ENCODE measurements at regions of chr12 and their contacts with region 1.

Region 1: DNA sequence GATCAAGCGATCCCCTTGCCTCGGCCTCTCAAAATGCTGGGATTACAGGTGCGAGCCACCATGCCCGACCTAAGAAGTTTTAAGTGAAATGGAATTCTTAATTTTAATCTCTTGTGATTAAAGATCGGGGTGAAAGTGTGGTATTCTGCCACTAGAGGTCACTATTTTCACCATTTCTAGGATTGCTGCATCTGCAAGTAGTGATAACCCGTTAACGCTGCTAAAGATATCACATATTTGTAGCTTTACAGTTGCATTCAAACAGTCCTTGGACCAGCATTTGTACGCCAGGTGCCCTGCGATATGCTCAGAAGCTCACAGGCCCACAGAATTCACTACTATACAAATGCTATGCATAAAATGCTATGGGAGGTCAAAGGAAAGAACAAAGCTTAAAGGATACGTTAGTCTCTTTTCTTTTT is 19.3 kb downstream of the CCDC62 start:
- DNase-seq: peak in 4 of 5 donors; percentile 55 to 60 (median 58)
- H3K4me3 ChIP-seq: no peak overlapping the region
- H3K4me3 Mint-ChIP-seq: peak overlapping the region in 1 of 8 donors; percentile 29
- H3K27ac ChIP-seq: no peak overlapping the region
- H3K27ac Mint-ChIP-seq: no peak overlapping the region
- H3K4me1 ChIP-seq: peaks cover 3% of the 10 kb centered on the region
- H3K4me1 Mint-ChIP-seq: peaks cover 0 to 5% (median 4%) of the 10 kb centered on the region in 4 donors
- H3K27me3 ChIP-seq: no peaks in the 10 kb centered on the region
- H3K27me3 Mint-ChIP-seq: no peaks in the 10 kb centered on the region

Region 2: DNA sequence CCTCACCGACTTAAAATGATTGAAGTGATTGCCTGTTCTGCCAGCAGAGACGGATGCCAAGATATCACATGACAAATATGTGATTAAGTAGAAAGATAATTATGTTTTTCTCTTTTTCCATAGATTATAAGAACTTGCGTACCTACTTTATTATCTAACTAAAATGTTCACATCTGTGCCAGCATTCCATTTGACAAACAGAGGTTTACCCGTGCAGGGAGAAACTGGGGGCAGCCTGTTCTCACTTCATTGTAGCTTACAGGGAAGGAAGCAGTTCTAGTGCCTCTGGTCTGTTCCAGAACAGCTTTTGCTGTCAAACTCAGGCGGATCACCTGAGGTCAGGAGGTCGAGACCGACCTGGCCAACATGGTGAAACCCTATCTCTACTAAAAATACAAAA is 10.2 kb after region 1 on chr12:
- CTCF ChIA-PET with region 1: interaction called, 13 read pairs
- POLR2A ChIA-PET with region 1: interaction called, 3 read pairs
- intact Hi-C with region 1: no loop called
- DNase-seq: no peak
- H3K4me3 ChIP-seq: no peak overlapping the region
- H3K4me3 Mint-ChIP-seq: no peak overlapping the region
- H3K27ac ChIP-seq: no peak overlapping the region
- H3K27ac Mint-ChIP-seq: no peak overlapping the region
- H3K4me1 ChIP-seq: no peaks in the 10 kb centered on the region
- H3K4me1 Mint-ChIP-seq: no peaks in the 10 kb centered on the region
- H3K27me3 ChIP-seq: no peaks in the 10 kb centered on the region
- H3K27me3 Mint-ChIP-seq: no peaks in the 10 kb centered on the region

Region 3: GRCh38 chr12:122819209-122819785 is 25.6 kb after region 1 on chr12:
- CTCF ChIA-PET with region 1: interaction called, 11 read pairs
- POLR2A ChIA-PET with region 1: no interaction called
- intact Hi-C with region 1: no loop called
- DNase-seq: no peak
- H3K4me3 ChIP-seq: no peak overlapping the region
- H3K4me3 Mint-ChIP-seq: no peak overlapping the region
- H3K27ac ChIP-seq: no peak overlapping the region
- H3K27ac Mint-ChIP-seq: no peak overlapping the region
- H3K4me1 ChIP-seq: no peaks in the 10 kb centered on the region
- H3K4me1 Mint-ChIP-seq: no peaks in the 10 kb centered on the region
- H3K27me3 ChIP-seq: no peaks in the 10 kb centered on the region
- H3K27me3 Mint-ChIP-seq: no peaks in the 10 kb centered on the region

Region 4: DNA sequence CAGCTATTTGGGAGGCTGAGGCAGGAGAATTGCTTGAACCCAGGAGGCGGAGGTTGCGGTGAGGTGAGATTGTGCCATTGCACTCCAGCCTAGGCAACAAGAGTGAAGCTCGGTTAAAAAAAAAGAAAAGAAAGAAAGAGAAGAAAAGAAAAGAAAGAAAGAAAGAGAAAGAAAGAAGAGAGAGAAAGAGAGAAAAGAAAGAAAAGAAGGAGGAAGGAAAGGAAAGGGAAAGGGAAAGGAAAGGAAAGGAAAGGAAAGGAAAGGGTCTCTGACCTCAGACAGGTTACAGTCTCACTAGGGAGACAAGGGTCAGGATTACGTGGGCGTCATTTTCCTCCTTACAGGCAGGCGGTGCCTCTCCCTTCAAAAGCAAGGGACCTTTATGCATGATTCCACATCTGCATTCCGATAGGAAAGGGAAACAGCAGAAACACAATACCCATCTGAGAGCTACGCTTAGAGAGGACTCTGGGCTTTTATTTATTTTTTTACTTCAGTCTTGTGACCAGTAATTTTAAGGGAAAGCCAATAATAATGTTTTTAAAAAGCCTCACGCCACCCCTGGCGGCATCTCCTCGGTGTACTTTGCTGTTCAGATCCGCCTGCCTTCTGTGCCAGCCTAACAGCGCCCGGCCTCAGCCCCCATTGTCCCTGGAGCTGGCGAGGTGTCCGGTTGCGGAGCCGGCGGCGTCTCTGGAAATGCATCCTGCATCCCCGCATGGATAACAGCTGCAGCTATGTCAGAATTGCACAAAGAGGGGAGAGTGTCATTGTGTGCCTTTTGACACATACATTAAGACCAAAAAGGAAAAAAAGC is 40.6 kb after region 1 on chr12:
- CTCF ChIA-PET with region 1: interaction called, 28 read pairs
- POLR2A ChIA-PET with region 1: interaction called, 13 read pairs
- intact Hi-C with region 1: loop called (anchors 1 kb)
- DNase-seq: peak in 4 of 5 donors; percentile 21 to 31 (median 26)
- H3K4me3 ChIP-seq: peak overlapping the region; percentile 23 to 63
- H3K4me3 Mint-ChIP-seq: peak overlapping the region; percentile 91 to 96 (median 94)
- H3K27ac ChIP-seq: no peak overlapping the region
- H3K27ac Mint-ChIP-seq: peak overlapping the region; percentile 84 to 97 (median 93)
- H3K4me1 ChIP-seq: peaks cover 30% of the 10 kb centered on the region
- H3K4me1 Mint-ChIP-seq: peaks cover 24 to 45% (median 38%) of the 10 kb centered on the region in 4 donors
- H3K27me3 ChIP-seq: no peaks in the 10 kb centered on the region
- H3K27me3 Mint-ChIP-seq: no peaks in the 10 kb centered on the region

Region 5: DNA sequence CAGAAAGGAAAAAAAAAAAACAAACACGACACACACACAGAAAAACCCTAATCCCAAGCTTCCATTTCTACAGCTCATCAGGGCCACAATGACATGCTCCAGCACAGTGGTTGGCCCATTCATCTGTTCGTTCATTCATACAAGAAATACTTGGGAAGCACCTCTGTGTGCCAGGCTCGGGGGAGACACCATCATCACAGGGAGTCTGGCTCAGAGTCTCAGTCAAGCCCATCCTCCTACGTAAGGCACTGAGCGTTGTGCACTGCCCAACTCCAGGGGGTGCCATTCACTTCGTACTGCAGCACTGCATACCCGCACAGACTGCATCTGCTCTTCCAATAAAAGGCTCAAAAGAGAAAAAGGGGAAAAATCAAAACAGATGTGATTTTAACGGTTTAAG is 87.0 kb after region 1 on chr12:
- CTCF ChIA-PET with region 1: no interaction called
- POLR2A ChIA-PET with region 1: no interaction called
- intact Hi-C with region 1: no loop called
- DNase-seq: no peak
- H3K4me3 ChIP-seq: no peak overlapping the region
- H3K4me3 Mint-ChIP-seq: peak overlapping the region in 3 of 8 donors; percentile 11 to 27 (median 20)
- H3K27ac ChIP-seq: no peak overlapping the region
- H3K27ac Mint-ChIP-seq: peak overlapping the region; percentile 41 to 87 (median 80)
- H3K4me1 ChIP-seq: peaks cover 86% of the 10 kb centered on the region
- H3K4me1 Mint-ChIP-seq: peaks cover 51 to 94% (median 74%) of the 10 kb centered on the region in 4 donors
- H3K27me3 ChIP-seq: no peaks in the 10 kb centered on the region
- H3K27me3 Mint-ChIP-seq: no peaks in the 10 kb centered on the region

Measured in CD4-positive, alpha-beta memory T cell (primary cell).